ENCODE measurements at regions of chr2 and their contacts with region 1.

Region 1: DNA sequence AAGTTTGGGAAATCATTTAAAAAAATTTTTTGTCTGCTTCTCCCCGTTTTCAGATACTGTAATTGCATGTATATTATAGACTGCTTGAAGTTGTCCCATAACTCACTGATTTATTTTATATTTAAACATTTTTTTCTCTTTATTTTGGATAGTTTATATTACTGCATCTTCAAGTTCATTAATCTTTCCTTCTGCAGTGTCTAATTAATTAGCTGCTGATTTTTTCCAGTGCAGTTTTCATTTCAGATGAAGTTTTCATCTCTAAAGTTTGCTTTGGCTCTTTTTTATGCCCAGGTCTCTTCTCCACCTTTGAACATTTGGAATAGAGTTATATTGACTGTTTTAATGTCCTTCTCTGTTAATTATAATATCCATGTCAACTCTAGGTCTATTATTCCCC is 9.3 kb downstream of the CLIP4 start:
- DNase-seq: no peak
- H3K4me3 ChIP-seq: no peak overlapping the region
- H3K4me3 Mint-ChIP-seq: peak overlapping the region in 1 of 7 donors; percentile 25
- H3K27ac ChIP-seq: no peak overlapping the region
- H3K27ac Mint-ChIP-seq: no peak overlapping the region
- H3K4me1 ChIP-seq: peaks cover 5% of the 10 kb centered on the region
- H3K4me1 Mint-ChIP-seq: peaks cover 56 to 77% (median 72%) of the 10 kb centered on the region in 3 donors
- H3K27me3 ChIP-seq: no peaks in the 10 kb centered on the region
- H3K27me3 Mint-ChIP-seq: no peaks in the 10 kb centered on the region

Region 2: DNA sequence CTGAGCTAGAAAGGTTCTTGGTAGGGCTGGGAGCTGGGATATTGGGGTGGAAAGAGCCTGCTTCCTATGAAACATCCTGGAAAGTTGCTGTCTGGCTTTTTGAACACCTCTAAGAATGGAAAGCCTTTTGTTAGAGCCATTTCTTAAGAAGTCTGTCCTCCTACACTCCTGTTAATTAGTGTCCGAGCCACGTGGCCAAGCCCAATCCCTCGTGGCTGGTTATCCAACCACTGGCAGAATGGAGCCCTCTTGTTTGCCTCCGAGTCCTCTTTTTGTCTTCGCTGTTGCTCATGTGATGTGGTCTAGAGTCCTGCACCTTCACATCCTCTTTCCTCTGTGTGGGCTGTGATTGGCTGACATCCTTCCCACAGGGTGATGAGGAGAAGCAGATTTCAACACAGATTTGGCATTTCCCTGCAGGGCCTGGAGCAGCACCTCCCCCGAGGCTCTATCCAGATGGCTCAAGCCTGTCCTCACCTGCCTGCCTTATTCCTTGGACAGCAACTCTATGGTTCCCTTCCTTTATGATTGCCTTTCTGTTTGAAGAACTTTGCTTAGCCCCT is 151.6 kb before region 1 on chr2:
- CTCF ChIA-PET with region 1: no interaction called
- POLR2A ChIA-PET with region 1: interaction called, 10 read pairs
- DNase-seq: no peak
- H3K4me3 ChIP-seq: no peak overlapping the region
- H3K4me3 Mint-ChIP-seq: peak overlapping the region in 2 of 7 donors; percentile 28 to 38
- H3K27ac ChIP-seq: no peak overlapping the region
- H3K27ac Mint-ChIP-seq: peak overlapping the region in 3 of 8 donors; percentile 31 to 82 (median 78)
- H3K4me1 ChIP-seq: peaks cover 6% of the 10 kb centered on the region
- H3K4me1 Mint-ChIP-seq: peaks cover 6 to 17% (median 15%) of the 10 kb centered on the region in 3 donors
- H3K27me3 ChIP-seq: no peaks in the 10 kb centered on the region
- H3K27me3 Mint-ChIP-seq: peaks cover 1 to 4% of the 10 kb centered on the region in 2 donors